Natural killer cell (primary cell): ENCODE measurements at regions of chr12 and their contacts with region 1.

Region 1: GRCh38 chr12:45728630-45729232 is 775 bp upstream of the ARID2 start:
- DNase-seq: peak; percentile 96 to 98
- ATAC-seq: peak; percentile 67 to 89 (median 72)
- H3K4me3 ChIP-seq: peak overlapping the region; percentile 88
- H3K4me3 Mint-ChIP-seq: peak overlapping the region; percentile 100
- H3K27ac ChIP-seq: peak overlapping the region; percentile 96
- H3K27ac Mint-ChIP-seq: peak overlapping the region; percentile 100
- H3K4me1 ChIP-seq: peaks cover 10% of the 10 kb centered on the region
- H3K4me1 Mint-ChIP-seq: peaks cover 50 to 61% of the 10 kb centered on the region in 2 donors
- H3K27me3 ChIP-seq: no peaks in the 10 kb centered on the region
- H3K27me3 Mint-ChIP-seq: no peaks in the 10 kb centered on the region
- CTCF ChIP-seq: peak; percentile 88

Region 2: DNA sequence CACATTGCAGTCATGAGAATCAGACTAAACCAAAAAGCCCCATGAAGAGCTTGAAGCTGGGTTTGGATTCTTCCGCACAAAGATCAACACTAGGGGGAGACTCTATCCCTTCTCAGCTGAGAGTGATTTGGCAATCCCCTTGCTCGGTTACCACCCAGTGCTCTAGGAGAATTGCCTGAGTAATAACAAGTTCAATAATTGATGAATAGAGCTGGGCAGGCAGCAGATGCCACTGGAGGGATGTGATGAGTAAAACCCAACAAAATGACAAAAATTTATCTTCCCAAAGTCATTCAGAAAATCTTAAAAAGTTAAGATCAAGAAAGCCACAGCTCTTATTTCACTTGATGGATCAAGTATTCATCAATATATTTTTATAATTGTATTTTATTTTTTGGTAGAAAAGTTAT is 184.8 kb before region 1 on chr12:
- intact Hi-C with region 1: loop called (anchors 1 kb)
- DNase-seq: peak in 1 of 2 donors; percentile 83
- ATAC-seq: peak; percentile 87 to 99 (median 96)
- H3K4me3 ChIP-seq: no peak overlapping the region
- H3K4me3 Mint-ChIP-seq: no peak overlapping the region
- H3K27ac ChIP-seq: no peak overlapping the region
- H3K27ac Mint-ChIP-seq: peak overlapping the region in 1 of 2 donors; percentile 36
- H3K4me1 ChIP-seq: no peaks in the 10 kb centered on the region
- H3K4me1 Mint-ChIP-seq: no peaks in the 10 kb centered on the region
- H3K27me3 ChIP-seq: no peaks in the 10 kb centered on the region
- H3K27me3 Mint-ChIP-seq: no peaks in the 10 kb centered on the region
- CTCF ChIP-seq: peak; percentile 75

Region 3: DNA sequence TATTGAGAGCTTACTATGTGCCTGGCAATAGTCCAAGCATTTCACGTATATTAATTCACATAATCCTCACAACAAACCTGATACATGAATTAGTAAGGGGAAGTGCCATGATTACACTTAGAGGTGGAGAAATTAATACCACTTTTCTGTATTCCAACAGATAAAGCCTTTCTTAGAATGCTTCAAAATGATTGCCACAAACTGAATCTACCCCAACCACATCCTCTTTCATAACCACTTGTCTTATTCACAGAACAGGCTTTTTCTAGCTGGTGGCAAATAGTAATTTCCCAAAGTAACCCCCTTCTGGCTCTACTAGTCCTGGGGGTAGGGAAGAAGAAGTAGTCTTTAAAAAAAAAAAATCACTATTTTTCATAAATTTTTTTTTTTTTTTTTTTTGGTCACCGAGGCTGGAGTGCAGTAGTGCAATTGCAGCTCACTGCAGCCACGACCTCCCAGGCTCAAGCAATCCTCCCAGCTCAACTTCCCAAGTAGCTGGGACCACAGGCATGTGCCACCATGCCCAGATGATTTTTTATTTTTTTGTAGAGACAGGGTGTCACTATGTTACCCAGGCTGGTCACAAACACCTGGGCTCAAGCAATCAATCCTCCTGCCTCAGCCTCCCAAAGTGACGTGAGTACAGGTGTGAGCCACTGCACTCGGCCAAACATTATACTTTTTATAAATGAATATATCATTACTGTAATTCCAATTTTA is 58.2 kb before region 1 on chr12:
- intact Hi-C with region 1: loop called (anchors 1 kb)
- DNase-seq: peak in 1 of 2 donors; percentile 69
- ATAC-seq: peak; percentile 76 to 84 (median 76)
- H3K4me3 ChIP-seq: no peak overlapping the region
- H3K4me3 Mint-ChIP-seq: peak overlapping the region; percentile 64
- H3K27ac ChIP-seq: peak overlapping the region; percentile 96
- H3K27ac Mint-ChIP-seq: peak overlapping the region; percentile 92 to 96
- H3K4me1 ChIP-seq: peaks cover 15% of the 10 kb centered on the region
- H3K4me1 Mint-ChIP-seq: peaks cover 17 to 21% of the 10 kb centered on the region in 2 donors
- H3K27me3 ChIP-seq: no peaks in the 10 kb centered on the region
- H3K27me3 Mint-ChIP-seq: no peaks in the 10 kb centered on the region
- CTCF ChIP-seq: no peak

Region 4: GRCh38 chr12:45775964-45776363 is 47.2 kb after region 1 on chr12:
- intact Hi-C with region 1: no loop called
- DNase-seq: no peak
- ATAC-seq: no peak
- H3K4me3 ChIP-seq: no peak overlapping the region
- H3K4me3 Mint-ChIP-seq: no peak overlapping the region
- H3K27ac ChIP-seq: no peak overlapping the region
- H3K27ac Mint-ChIP-seq: no peak overlapping the region
- H3K4me1 ChIP-seq: peaks cover 5% of the 10 kb centered on the region
- H3K4me1 Mint-ChIP-seq: peaks cover 34 to 41% of the 10 kb centered on the region in 2 donors
- H3K27me3 ChIP-seq: no peaks in the 10 kb centered on the region
- H3K27me3 Mint-ChIP-seq: no peaks in the 10 kb centered on the region
- CTCF ChIP-seq: no peak

Region 5: DNA sequence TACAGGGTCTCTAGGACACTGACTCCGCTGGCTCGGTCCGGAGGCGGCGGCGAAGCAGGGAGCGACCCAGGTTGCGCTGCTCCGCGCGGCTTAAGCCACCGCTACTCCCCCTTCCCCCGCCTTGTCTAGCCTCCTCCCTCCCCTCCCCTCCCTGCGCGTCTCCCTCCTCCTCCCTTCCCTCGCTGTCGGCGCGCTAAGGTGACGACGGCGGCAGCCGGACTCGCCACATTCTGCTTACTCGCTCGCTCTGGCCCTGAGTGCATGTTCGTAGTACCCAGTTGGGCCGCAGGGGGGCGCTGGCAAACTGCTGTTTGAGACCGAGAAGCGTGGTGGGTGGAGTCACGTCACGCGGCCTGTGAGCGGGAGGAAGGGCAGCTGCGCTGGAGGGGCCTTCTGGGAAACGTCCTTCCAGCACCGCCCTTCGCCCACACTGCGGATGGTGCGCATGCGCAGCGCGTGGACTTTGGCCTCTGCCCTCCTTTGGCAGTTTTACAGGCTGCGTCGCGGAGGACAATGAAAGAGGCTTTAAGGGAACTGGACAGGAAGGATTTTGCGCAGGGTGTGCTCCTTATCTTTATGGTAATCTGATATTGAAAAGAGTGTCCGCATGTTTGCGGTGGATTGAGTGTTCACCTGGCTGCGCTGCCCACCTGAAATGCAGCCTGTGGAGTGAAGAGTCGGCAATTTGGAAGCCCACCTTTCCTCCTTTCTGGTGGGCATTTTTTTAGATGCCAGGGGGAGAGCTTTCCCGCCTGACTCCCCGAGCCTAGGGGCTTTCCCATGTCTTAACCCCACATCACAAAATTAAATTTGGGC is 261.9 kb after region 1 on chr12 and contains the start of gene SCAF11:
- intact Hi-C with region 1: loop called (anchors 2 kb)
- DNase-seq: peak; percentile 100
- ATAC-seq: peak; percentile 83 to 96 (median 85)
- H3K4me3 ChIP-seq: peak within 1 kb of the TSS; percentile 69
- H3K4me3 Mint-ChIP-seq: peak within 1 kb of the TSS; percentile 96
- H3K27ac ChIP-seq: peak within 1 kb of the TSS; percentile 89
- H3K27ac Mint-ChIP-seq: peak within 1 kb of the TSS; percentile 98
- H3K4me1 ChIP-seq: peaks cover 12% of the 10 kb centered on the region
- H3K4me1 Mint-ChIP-seq: peaks cover 49 to 52% of the 10 kb centered on the region in 2 donors
- H3K27me3 ChIP-seq: no peaks in the 10 kb centered on the region
- H3K27me3 Mint-ChIP-seq: peaks cover 0 to 2% of the 10 kb centered on the region in 2 donors
- CTCF ChIP-seq: peak; percentile 78
- total RNA-seq, gene SCAF11: 208 to 232 (median 220) TPM

Region 6: DNA sequence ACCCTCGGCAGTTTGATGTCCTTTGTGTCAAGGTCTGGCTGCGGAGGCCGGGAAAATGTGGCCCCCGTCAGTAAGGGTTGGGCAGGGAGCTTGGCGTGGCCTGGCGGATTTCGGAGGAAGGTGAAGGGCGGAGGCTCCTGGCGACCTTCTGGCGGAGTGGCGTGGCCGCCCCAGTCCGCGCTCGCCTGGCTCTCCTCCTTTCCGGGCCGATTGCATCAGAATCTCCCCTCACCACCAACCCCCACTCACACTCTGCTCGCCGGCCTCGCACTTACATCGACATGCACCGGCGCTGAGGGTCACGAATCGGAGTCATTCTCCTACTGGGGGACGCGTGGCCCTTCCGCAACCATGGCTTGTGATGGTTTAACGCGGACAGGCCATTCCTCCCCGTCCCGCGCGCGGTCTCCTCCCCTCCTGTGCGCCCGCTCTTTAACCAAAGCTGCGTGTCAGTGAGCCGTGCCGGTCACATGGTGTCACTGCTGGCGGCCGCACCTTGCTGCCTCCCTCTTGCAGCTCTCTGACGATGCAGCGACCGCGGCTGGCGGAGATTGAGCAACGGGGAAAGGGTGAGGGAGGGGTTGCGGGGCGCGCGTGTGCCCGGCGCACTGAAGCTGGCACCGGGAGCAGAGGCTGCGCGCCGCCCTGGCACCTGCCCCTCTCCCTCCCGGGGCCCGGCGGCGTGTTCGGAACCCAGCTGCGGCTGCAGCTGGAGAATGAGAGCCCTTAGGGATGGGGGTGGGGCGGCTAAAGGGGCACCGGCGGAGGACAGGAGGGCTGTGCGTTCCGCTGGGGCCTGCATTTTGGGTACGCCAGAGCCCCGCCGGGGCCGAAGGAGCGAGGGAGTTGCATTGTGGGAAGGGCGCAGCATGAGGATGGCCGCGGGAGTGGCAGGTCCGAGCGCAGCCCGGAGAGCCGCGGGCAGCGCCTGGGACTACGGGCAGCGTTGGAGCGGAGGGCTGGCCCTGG is 540.1 kb after region 1 on chr12 and contains the start of gene SLC38A1:
- intact Hi-C with region 1: loop called (anchors 5 kb)
- DNase-seq: peak; percentile 85 to 95
- ATAC-seq: peak; percentile 61 to 81 (median 78)
- H3K4me3 ChIP-seq: peak within 1 kb of the TSS; percentile 74
- H3K4me3 Mint-ChIP-seq: no peak within 1 kb of the TSS
- H3K27ac ChIP-seq: peak within 1 kb of the TSS; percentile 94
- H3K27ac Mint-ChIP-seq: no peak within 1 kb of the TSS
- H3K4me1 ChIP-seq: peaks cover 23% of the 10 kb centered on the region
- H3K4me1 Mint-ChIP-seq: peaks cover 11 to 17% of the 10 kb centered on the region in 2 donors
- H3K27me3 ChIP-seq: no peaks in the 10 kb centered on the region
- H3K27me3 Mint-ChIP-seq: no peaks in the 10 kb centered on the region
- CTCF ChIP-seq: no peak
- total RNA-seq, gene SLC38A1: 295 to 385 (median 354) TPM